Colonic mucosa (tissue), 4 donors: ENCODE measurements at regions of chr17 and their contacts with region 1.

Region 1: DNA sequence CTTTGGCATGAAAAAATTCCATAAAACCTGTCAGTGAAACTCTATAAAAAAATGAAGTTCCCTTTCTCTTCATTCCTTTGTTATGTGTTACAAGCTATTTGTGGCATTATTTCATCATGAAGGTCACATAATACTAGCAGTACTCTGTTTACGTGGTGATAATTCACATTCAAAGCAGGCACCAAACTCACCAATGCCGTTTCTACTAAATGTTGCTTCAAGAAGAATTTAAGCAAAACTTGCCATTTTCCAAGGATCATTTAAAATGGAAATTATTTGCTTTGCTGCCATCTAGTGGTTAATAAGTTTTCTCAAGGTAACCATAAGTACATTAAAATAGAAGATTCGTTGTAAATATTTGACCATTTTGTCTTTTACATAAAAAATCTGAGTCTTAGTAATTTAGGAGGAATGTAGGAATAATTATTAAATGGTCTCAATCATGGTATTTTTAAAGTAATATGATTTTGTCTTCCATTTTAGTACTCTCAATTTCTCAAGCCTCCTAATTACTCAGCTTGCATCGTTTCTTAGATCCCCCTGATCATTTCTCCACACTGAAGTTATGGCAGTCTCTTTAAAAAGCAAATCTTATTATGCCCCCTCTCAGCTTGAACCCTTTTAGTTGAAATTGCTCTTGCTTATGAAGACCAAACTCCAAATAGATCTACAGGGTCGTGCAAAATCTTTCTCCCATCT is 80.8 kb downstream of the OMG start:
- DNase-seq: no peak
- H3K4me3 ChIP-seq: no peak overlapping the region
- H3K27ac ChIP-seq: no peak overlapping the region
- H3K4me1 ChIP-seq: no peaks in the 10 kb centered on the region
- H3K27me3 ChIP-seq: no peaks in the 10 kb centered on the region
- CTCF ChIP-seq: peak; percentile 48

Region 2: DNA sequence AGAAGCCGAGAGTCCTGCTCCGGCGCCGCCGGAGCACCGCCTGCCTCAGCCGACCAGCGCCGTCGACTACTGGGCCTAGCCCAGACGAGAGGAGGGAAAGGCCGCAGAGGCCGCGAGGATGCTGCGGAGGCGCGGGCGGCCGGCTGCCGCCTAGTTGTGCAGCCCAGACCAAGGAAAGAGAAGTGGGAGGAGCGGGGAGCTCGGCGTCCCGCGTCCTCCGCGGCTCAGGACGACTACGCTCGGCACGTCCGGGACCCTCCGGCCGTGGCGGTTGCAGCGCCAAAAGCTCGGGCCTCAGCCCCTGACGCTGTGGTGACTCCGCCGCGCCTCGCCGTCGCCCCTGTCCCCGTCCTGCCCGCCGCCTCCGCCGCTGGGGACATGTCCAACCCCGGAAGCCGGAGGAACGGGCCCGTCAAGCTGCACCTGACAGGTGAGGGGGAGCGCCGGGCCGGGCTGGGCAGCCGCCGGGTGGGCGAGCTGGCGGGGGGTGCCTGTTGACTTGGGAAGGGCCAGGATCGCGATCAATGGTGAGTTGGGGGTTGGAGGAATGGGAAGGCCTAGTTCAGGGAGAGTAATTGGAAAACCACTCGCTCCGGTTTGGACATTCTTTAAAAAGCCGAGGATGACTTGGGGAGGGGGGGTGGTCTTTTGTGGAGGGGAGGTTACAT is 207.7 kb before region 1 on chr17:
- intact Hi-C with region 1: loop called (anchors 2 kb)
- DNase-seq: peak; percentile 67
- H3K4me3 ChIP-seq: peak overlapping the region; percentile 59
- H3K27ac ChIP-seq: peak overlapping the region; percentile 50
- H3K4me1 ChIP-seq: no peaks in the 10 kb centered on the region
- H3K27me3 ChIP-seq: no peaks in the 10 kb centered on the region
- CTCF ChIP-seq: no peak

Region 3: GRCh38 chr17:31842183-31843069 is 626.2 kb after region 1 on chr17:
- intact Hi-C with region 1: no loop called
- DNase-seq: peak; percentile 78
- H3K4me3 ChIP-seq: peak overlapping the region; percentile 16
- H3K27ac ChIP-seq: peak overlapping the region; percentile 15
- H3K4me1 ChIP-seq: no peaks in the 10 kb centered on the region
- H3K27me3 ChIP-seq: no peaks in the 10 kb centered on the region
- CTCF ChIP-seq: peak; percentile 98